CD8-positive, alpha-beta T cell (primary cell): ENCODE measurements at regions of chr19 and their contacts with region 1.

Region 1: DNA sequence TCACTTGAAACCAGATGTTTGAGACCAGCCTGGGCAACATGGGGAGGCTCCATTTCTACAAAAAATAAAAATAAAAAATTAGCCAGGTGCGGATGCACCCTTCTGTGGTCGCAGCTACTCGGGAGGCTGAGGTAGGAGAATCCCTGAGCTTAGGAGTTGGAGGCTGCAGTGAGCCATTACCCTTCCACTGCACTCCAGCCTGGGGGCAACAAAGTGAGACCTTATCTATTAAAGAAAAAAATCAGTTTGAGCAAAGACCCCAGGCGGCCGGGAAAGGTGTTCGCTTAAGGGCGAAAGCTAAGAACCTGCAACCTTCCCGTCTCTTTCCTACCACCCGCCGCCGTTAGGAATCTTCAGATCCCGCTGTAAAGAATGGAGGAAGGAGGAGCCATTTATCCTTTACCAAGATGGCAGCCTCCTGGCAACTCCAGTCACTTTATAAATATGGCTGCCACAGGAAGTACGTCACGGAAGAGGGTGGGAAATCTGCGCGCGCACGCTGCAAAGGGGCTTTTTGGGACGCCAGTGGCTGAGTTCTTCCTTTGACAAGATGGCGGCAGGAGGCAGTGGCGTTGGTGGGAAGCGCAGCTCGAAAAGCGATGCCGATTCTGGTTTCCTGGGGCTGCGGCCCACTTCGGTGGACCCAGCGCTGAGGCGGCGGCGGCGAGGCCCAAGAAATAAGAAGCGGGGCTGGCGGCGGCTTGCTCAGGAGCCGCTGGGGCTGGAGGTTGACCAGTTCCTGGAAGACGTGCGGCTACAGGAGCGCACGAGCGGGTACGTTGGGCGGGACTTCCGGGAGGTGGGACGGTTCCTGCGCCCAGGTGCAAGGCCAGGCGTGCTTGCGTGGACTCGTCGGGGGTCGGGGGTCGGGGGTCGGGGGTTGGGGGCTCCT is at the start of gene NOP53:
- DNase-seq: peak; percentile 91 to 99 (median 97)
- ATAC-seq: peak; percentile 82
- H3K4me3 ChIP-seq: peak within 1 kb of the TSS; percentile 64 to 78
- H3K4me3 Mint-ChIP-seq: peak within 1 kb of the TSS; percentile 99
- H3K27ac ChIP-seq: peak within 1 kb of the TSS; percentile 85 to 96
- H3K27ac Mint-ChIP-seq: peak within 1 kb of the TSS; percentile 100
- H3K4me1 ChIP-seq: peaks cover 60% of the 10 kb centered on the region
- H3K4me1 Mint-ChIP-seq: peaks cover 39% of the 10 kb centered on the region
- H3K27me3 ChIP-seq: no peaks in the 10 kb centered on the region
- H3K27me3 Mint-ChIP-seq: no peaks in the 10 kb centered on the region
- CTCF ChIP-seq: no peak
- total RNA-seq, gene NOP53: 924 to 926 TPM

Region 2: GRCh38 chr19:47436712-47437401 is 308.4 kb before region 1 on chr19:
- CTCF ChIA-PET with region 1: interaction called, 17 read pairs
- POLR2A ChIA-PET with region 1: interaction called, 3 read pairs
- intact Hi-C with region 1: loop called in 1 of 2 experiments (anchors 1 kb)
- DNase-seq: peak; percentile 66 to 92 (median 85)
- ATAC-seq: peak; percentile 96
- H3K4me3 ChIP-seq: no peak overlapping the region
- H3K4me3 Mint-ChIP-seq: no peak overlapping the region
- H3K27ac ChIP-seq: no peak overlapping the region
- H3K27ac Mint-ChIP-seq: no peak overlapping the region
- H3K4me1 ChIP-seq: no peaks in the 10 kb centered on the region
- H3K4me1 Mint-ChIP-seq: peaks cover 11% of the 10 kb centered on the region
- H3K27me3 ChIP-seq: peaks cover 7 to 18% of the 10 kb centered on the region in 2 experiments
- H3K27me3 Mint-ChIP-seq: peaks cover 60% of the 10 kb centered on the region
- CTCF ChIP-seq: peak; percentile 86

Region 3: DNA sequence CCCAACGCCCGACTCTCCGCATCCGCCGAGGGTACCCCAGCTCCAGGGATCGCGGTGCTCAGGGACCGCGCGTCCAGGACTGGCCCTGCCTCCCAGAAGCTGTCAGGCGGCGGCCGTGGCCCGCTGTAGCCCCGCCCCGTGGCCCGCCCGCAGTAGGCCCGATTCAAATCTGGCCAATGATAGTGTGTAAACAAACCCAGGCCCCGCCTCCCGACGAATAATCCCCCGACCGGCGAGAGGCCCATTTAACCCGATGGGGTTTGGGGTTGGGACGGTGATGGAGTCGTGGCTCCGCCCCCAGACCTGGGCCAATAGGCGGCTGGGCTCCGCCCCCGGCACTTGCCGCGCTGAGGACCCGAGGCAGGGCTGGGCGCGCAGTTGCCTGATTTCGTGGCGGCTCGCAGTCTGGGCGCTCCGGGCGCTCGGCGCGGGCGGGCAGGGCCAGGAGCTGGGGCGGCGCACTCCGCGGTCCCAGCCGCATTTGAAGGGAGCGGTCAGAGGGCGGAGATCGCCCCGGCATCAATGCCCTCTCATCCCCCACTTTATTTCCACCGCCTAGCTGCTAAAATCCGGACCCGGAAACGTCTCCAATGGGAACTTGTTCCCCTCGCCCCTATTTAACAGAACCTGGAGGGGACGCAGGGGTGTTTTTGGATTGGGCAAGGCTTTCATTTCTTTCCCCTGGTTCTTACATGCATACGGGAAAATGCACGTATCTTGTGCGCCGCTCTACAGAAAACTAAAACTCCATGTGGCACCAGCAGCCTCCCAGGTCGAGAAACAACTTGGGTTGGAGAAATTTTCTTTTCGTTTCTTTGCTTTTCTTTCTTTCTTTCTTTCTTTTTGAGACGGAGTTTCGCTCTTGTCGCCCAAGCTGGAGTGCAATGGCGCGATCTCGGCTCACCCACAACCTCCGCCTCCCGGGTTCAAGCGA is 144.7 kb before region 1 on chr19:
- CTCF ChIA-PET with region 1: no interaction called
- POLR2A ChIA-PET with region 1: no interaction called
- intact Hi-C with region 1: loop called (anchors 1 kb)
- DNase-seq: peak; percentile 99 to 100 (median 100)
- ATAC-seq: peak; percentile 97
- H3K4me3 ChIP-seq: peak overlapping the region; percentile 77 to 93
- H3K4me3 Mint-ChIP-seq: peak overlapping the region; percentile 82
- H3K27ac ChIP-seq: peak overlapping the region; percentile 80 to 83
- H3K27ac Mint-ChIP-seq: peak overlapping the region; percentile 81
- H3K4me1 ChIP-seq: peaks cover 10% of the 10 kb centered on the region
- H3K4me1 Mint-ChIP-seq: peaks cover 26% of the 10 kb centered on the region
- H3K27me3 ChIP-seq: no peaks in the 10 kb centered on the region
- H3K27me3 Mint-ChIP-seq: no peaks in the 10 kb centered on the region
- CTCF ChIP-seq: no peak

Region 4: GRCh38 chr19:47697863-47698609 is 47.2 kb before region 1 on chr19:
- CTCF ChIA-PET with region 1: interaction called, 3 read pairs
- POLR2A ChIA-PET with region 1: no interaction called
- intact Hi-C with region 1: loop called in 1 of 2 experiments (anchors 1 kb)
- DNase-seq: peak in 8 of 9 experiments; percentile 25 to 71 (median 49)
- ATAC-seq: peak; percentile 85
- H3K4me3 ChIP-seq: no peak overlapping the region
- H3K4me3 Mint-ChIP-seq: no peak overlapping the region
- H3K27ac ChIP-seq: no peak overlapping the region
- H3K27ac Mint-ChIP-seq: no peak overlapping the region
- H3K4me1 ChIP-seq: no peaks in the 10 kb centered on the region
- H3K4me1 Mint-ChIP-seq: peaks cover 5% of the 10 kb centered on the region
- H3K27me3 ChIP-seq: no peaks in the 10 kb centered on the region
- H3K27me3 Mint-ChIP-seq: no peaks in the 10 kb centered on the region
- CTCF ChIP-seq: peak; percentile 93

Region 5: GRCh38 chr19:47713046-47714021 is 31.9 kb before region 1 on chr19 and contains the start of gene EHD2:
- CTCF ChIA-PET with region 1: interaction called, 24 read pairs
- POLR2A ChIA-PET with region 1: no interaction called
- intact Hi-C with region 1: loop called (anchors 1 kb)
- DNase-seq: peak in 7 of 9 experiments; percentile 11 to 67 (median 50)
- ATAC-seq: peak; percentile 65
- H3K4me3 ChIP-seq: no peak within 1 kb of the TSS
- H3K4me3 Mint-ChIP-seq: no peak within 1 kb of the TSS
- H3K27ac ChIP-seq: no peak within 1 kb of the TSS
- H3K27ac Mint-ChIP-seq: no peak within 1 kb of the TSS
- H3K4me1 ChIP-seq: no peaks in the 10 kb centered on the region
- H3K4me1 Mint-ChIP-seq: peaks cover 2% of the 10 kb centered on the region
- H3K27me3 ChIP-seq: peaks cover 0 to 16% of the 10 kb centered on the region in 2 experiments
- H3K27me3 Mint-ChIP-seq: peaks cover 40% of the 10 kb centered on the region
- CTCF ChIP-seq: peak; percentile 85
- total RNA-seq, gene EHD2: 0.25 TPM in 1 of 2 experiments, not detected in the other